ENCODE measurements at regions of chr10 and their contacts with region 1.

Region 1: GRCh38 chr10:5023177-5023805 is 19.6 kb upstream of the AKR1C2 start:
- DNase-seq: no peak
- H3K4me3 ChIP-seq: no peak overlapping the region
- H3K27ac ChIP-seq: no peak overlapping the region
- H3K4me1 ChIP-seq: peaks cover 29% of the 10 kb centered on the region
- H3K27me3 ChIP-seq: no peaks in the 10 kb centered on the region

Region 2: DNA sequence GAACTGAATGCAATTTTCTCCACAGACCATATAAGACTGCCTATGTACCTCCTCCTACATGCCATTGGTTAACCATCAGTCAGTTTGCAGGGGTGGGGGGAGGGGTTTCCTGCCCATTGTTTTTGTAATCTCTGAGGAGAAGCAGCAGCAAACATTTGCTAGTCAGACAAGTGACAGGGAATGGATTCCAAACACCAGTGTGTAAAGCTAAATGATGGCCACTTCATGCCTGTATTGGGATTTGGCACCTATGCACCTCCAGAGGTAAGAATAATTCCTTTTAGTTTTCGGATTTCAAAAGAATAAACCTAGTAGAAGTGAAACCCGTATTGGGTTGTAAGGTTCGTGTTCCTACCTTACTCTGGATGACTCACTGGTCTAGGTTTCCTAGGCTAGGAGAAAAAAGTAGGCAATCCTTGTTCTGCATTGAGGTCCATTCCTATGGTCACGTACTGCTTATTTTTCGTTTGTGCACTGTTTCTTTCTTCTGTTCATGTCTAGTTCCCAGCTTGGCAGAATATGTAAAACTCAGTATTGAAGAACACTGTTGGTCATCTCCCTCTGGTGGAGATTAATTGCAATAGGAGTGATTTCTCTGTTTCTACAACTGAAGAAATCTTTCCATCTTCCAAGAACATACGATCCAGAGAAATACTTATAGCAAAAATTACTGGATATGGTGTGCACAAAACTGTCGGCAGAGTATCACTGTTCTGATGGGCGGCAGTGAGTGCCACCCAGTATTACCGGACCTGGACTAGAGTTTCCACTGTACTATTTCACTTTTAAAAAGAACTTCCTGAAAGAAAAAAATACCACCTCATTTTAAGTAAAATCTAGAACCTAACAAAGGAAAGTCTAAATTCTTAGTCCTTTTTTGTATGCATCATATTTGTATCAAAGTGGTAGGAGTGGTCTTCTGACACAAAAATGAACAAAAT is 71.2 kb after region 1 on chr10 and contains the start of gene AKR1C3:
- in situ Hi-C with region 1: loop called (anchors 10 kb)
- DNase-seq: peak; percentile 88
- H3K4me3 ChIP-seq: peak within 1 kb of the TSS; percentile 89
- H3K27ac ChIP-seq: peak within 1 kb of the TSS; percentile 75
- H3K4me1 ChIP-seq: peaks cover 12% of the 10 kb centered on the region; the same call in 1 of the 2 replicates
- H3K27me3 ChIP-seq: no peaks in the 10 kb centered on the region
- total RNA-seq, gene AKR1C3: 23.2 and 36.2 TPM in 2 replicates

Region 3: GRCh38 chr10:5274795-5275194 is 251.5 kb after region 1 on chr10:
- in situ Hi-C with region 1: no loop called
- DNase-seq: no peak
- H3K4me3 ChIP-seq: no peak overlapping the region
- H3K27ac ChIP-seq: no peak overlapping the region
- H3K4me1 ChIP-seq: no peaks in the 10 kb centered on the region
- H3K27me3 ChIP-seq: no peaks in the 10 kb centered on the region

Measured in GM23248 (cell line).